IMR-90 (cell line): ENCODE measurements at regions of chr10 and their contacts with region 1.

Region 1: GRCh38 chr10:3467052-3467951 is 294.7 kb upstream of the PITRM1 start:
- DNase-seq: peak; percentile 93
- ATAC-seq: peak; percentile 58
- H3K4me3 ChIP-seq: no peak overlapping the region
- H3K27ac ChIP-seq: peak overlapping the region; percentile 89
- H3K4me1 ChIP-seq: peaks cover 22% of the 10 kb centered on the region
- H3K27me3 ChIP-seq: no peaks in the 10 kb centered on the region
- CTCF ChIP-seq: 0 out of 2 replicates have a peak, but pooled peaks have one; percentile 15
- POLR2A ChIP-seq: no peak
- RAD21 ChIP-seq: no peak

Region 2: DNA sequence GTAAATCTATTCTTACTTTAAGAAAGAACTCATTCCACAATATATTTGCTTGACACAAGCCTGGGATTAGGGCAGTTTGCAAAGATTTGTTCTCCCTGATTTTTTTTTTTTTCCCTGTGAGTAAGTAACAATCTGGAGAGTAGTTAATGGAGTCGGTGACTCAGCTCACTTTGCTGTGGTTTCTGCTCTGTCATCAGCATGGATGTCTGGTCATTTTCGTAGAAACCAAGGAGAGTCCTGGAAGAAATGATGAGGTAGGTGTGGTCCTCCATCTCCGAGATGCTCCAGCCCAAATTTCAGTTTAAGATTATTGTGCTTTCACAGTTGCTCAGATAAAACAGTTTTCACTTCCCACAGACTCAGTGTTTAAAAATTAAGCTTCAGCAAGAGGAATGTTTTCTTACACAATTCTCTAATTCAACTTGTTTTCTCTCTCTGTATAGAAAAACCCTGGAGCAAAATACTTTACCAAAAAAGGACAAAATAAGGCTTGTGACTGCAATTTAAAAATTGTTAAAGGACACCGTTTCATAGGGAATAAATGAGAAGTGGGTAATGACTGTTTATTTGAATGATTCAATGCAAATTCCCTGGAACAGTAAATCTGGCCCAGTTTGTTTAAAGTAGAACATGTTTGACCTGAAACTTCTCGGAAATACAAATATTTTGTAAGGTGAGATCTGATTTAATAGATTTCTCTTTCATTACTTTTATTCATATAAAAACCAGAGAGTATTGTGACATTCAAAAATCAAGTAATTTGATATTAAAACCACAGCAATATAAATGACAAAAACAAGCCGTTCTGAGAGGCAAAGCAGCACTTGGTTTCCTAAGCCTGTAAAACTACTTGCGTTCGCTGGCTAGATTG is 218.2 kb before region 1 on chr10:
- CTCF ChIA-PET with region 1: no interaction called
- POLR2A ChIA-PET with region 1: interaction called, 3 read pairs
- dilution Hi-C with region 1: no loop called
- in situ Hi-C with region 1: no loop called
- intact Hi-C with region 1: loop called (anchors 1 kb)
- DNase-seq: peak; percentile 94
- ATAC-seq: peak; percentile 95
- H3K4me3 ChIP-seq: peak overlapping the region; percentile 11; the same call in 1 of the 2 replicates
- H3K27ac ChIP-seq: peak overlapping the region; percentile 89
- H3K4me1 ChIP-seq: peaks cover 4% of the 10 kb centered on the region
- H3K27me3 ChIP-seq: no peaks in the 10 kb centered on the region
- CTCF ChIP-seq: no peak
- POLR2A ChIP-seq: no peak
- RAD21 ChIP-seq: no peak; the same call in 1 of the 2 replicates

Region 3: DNA sequence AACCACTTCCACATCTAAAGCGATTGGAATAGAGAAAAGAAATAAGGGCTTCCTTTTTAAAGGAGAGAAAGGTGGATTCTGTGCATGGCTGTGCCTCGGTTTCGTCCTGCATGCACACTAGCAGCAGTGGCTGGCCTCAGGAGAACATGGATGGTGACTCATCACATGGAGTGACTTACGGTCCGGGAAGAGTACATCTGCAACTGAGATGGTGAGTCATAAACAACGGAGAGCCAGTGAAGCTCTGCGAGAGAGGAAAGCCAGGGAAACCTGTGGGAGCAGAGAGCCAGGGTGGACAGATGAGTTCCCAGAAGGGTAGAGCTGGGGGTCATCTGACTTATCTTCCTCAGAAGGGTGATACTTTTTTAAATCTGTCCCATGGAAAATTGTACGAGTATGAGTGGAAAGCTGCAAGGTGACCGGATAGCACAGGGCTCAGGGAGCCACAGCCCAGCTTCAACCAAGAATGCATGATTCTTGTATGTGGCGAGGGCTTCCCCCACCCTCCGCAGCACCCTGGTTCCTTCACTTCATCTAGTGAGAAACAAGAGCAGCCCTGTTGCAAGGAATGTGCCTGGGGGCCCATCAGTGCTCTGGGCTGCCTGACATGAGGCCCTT is 58.6 kb after region 1 on chr10:
- CTCF ChIA-PET with region 1: no interaction called
- POLR2A ChIA-PET with region 1: no interaction called
- dilution Hi-C with region 1: no loop called
- in situ Hi-C with region 1: no loop called
- intact Hi-C with region 1: loop called (anchors 2 kb)
- DNase-seq: peak; percentile 99
- ATAC-seq: peak; percentile 97
- H3K4me3 ChIP-seq: no peak overlapping the region
- H3K27ac ChIP-seq: peak overlapping the region; percentile 49
- H3K4me1 ChIP-seq: peaks cover 14% of the 10 kb centered on the region
- H3K27me3 ChIP-seq: no peaks in the 10 kb centered on the region
- CTCF ChIP-seq: no peak
- POLR2A ChIP-seq: no peak
- RAD21 ChIP-seq: peak; percentile 39

Region 4: DNA sequence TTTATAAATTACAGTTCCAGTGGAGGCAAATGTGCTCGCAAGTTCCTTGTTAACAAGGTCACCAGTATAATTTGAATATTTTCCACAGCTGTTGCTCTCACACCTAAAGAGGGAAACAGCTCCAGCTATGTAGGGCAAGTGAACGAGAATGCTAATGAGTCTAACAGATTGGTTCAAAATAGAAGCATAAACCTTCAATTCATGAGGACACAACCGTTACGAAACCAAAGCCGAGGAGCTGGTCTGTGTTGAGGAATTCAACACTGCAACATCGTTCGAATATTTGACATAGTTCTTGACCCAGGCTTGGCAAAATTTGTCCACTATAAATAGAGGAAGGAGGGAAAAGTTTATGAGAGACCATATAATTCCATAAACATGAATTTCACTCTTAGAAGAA is 156.4 kb after region 1 on chr10:
- CTCF ChIA-PET with region 1: no interaction called
- POLR2A ChIA-PET with region 1: no interaction called
- dilution Hi-C with region 1: no loop called
- in situ Hi-C with region 1: loop called (anchors 10 kb)
- intact Hi-C with region 1: loop called (anchors 2 kb)
- DNase-seq: peak; percentile 87
- ATAC-seq: peak; percentile 78
- H3K4me3 ChIP-seq: no peak overlapping the region
- H3K27ac ChIP-seq: peak overlapping the region; percentile 15; the same call in 1 of the 2 replicates
- H3K4me1 ChIP-seq: peaks cover 11% of the 10 kb centered on the region
- H3K27me3 ChIP-seq: no peaks in the 10 kb centered on the region
- CTCF ChIP-seq: no peak
- POLR2A ChIP-seq: no peak
- RAD21 ChIP-seq: no peak

Region 5: DNA sequence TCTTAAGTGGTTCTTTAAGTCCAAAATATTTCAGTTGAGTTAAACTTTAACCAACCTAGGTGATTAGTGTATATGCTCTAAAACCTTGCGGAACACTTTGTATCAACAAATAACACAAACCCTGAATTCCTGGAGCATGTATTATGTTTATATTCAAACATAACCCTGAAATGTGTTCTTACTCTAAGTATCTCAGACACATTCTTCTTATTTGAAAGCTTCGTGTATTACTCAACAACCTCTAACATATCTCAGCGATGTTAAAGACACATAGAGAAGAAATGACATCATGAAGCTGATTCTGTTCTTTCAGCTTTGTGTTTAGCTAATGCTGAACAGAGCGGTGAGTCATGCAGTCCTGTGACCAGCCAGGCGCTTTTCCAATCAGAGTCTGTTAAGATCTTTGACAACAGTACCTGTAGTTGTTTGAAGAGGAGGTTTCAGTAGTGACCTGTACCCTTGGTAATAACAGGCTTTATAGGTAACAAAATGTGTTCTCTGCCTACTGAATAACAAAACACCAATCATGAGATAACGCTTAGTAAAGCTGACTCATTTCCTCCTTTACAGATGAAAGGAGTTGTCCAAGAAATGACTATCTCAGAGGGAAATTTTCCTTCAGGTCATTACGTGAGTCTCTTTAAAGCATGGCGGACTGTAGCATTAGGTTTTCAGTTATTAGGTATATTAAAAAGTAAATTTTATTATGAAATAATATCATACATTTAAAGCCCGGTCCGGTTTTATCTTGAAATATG is 385.0 kb after region 1 on chr10:
- CTCF ChIA-PET with region 1: no interaction called
- POLR2A ChIA-PET with region 1: no interaction called
- dilution Hi-C with region 1: no loop called
- in situ Hi-C with region 1: no loop called
- intact Hi-C with region 1: loop called (anchors 5 kb)
- DNase-seq: peak; percentile 99
- ATAC-seq: peak; percentile 88
- H3K4me3 ChIP-seq: no peak overlapping the region
- H3K27ac ChIP-seq: peak overlapping the region; percentile 85
- H3K4me1 ChIP-seq: peaks cover 19% of the 10 kb centered on the region
- H3K27me3 ChIP-seq: no peaks in the 10 kb centered on the region
- CTCF ChIP-seq: no peak
- POLR2A ChIP-seq: peak; percentile 12
- RAD21 ChIP-seq: no peak; the same call in 1 of the 2 replicates

Region 6: DNA sequence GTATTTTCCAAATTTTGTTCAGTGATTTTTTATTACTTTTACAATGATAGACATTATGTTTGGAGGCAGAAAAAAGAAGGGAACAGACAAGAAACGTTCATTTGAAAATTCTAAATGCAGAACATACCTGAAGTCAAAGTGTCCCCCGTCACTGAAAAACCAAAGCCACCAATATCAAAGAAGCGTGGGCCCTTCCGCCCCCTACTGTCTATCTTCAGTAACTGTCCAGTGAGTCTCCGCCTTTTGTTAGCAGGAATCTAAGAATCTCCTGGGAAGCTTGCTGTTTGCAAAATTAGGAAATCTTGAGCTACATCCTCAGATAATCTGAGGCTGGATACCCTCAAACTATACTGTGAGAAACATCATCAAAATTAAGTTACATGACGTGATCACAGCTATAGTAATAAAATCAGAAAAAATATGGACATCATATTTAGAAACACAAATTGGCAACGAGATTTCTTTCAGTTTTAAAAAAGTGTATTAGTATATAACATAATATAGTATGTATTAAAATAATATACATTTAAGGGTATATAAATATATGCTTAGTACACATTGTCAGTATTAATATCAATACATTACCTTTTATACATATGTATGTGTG is 1189.4 kb after region 1 on chr10:
- CTCF ChIA-PET with region 1: no interaction called
- POLR2A ChIA-PET with region 1: no interaction called
- dilution Hi-C with region 1: no loop called
- in situ Hi-C with region 1: no loop called
- intact Hi-C with region 1: loop called (anchors 10 kb)
- DNase-seq: peak; percentile 67
- ATAC-seq: peak; percentile 72
- H3K4me3 ChIP-seq: no peak overlapping the region
- H3K27ac ChIP-seq: no peak overlapping the region
- H3K4me1 ChIP-seq: peaks cover 2% of the 10 kb centered on the region
- H3K27me3 ChIP-seq: no peaks in the 10 kb centered on the region
- CTCF ChIP-seq: peak; percentile 82
- POLR2A ChIP-seq: peak; percentile 45; the same call in 1 of the 2 replicates
- RAD21 ChIP-seq: peak; percentile 96